ENCODE measurements at regions of chr19 and their contacts with region 1.

Region 1: GRCh38 chr19:16324384-16325160 is at the start of gene KLF2:
- DNase-seq: peak; percentile 92
- ATAC-seq: peak; percentile 63
- H3K4me3 Mint-ChIP-seq: peak within 1 kb of the TSS; percentile 77
- H3K27ac Mint-ChIP-seq: peak within 1 kb of the TSS; percentile 81
- H3K4me1 Mint-ChIP-seq: peaks cover 77% of the 10 kb centered on the region
- H3K27me3 Mint-ChIP-seq: no peaks in the 10 kb centered on the region
- CTCF ChIP-seq: no peak
- total RNA-seq, gene KLF2: 76.8 and 87.6 TPM in 2 replicates

Region 2: GRCh38 chr19:15828429-15829305 is 495.9 kb before region 1 on chr19:
- CTCF ChIA-PET with region 1: no interaction called
- POLR2A ChIA-PET with region 1: no interaction called
- intact Hi-C with region 1: no loop called
- DNase-seq: no peak
- ATAC-seq: no peak
- H3K4me3 Mint-ChIP-seq: no peak overlapping the region
- H3K27ac Mint-ChIP-seq: no peak overlapping the region
- H3K4me1 Mint-ChIP-seq: no peaks in the 10 kb centered on the region
- H3K27me3 Mint-ChIP-seq: peaks cover 21% of the 10 kb centered on the region
- CTCF ChIP-seq: no peak

Region 3: DNA sequence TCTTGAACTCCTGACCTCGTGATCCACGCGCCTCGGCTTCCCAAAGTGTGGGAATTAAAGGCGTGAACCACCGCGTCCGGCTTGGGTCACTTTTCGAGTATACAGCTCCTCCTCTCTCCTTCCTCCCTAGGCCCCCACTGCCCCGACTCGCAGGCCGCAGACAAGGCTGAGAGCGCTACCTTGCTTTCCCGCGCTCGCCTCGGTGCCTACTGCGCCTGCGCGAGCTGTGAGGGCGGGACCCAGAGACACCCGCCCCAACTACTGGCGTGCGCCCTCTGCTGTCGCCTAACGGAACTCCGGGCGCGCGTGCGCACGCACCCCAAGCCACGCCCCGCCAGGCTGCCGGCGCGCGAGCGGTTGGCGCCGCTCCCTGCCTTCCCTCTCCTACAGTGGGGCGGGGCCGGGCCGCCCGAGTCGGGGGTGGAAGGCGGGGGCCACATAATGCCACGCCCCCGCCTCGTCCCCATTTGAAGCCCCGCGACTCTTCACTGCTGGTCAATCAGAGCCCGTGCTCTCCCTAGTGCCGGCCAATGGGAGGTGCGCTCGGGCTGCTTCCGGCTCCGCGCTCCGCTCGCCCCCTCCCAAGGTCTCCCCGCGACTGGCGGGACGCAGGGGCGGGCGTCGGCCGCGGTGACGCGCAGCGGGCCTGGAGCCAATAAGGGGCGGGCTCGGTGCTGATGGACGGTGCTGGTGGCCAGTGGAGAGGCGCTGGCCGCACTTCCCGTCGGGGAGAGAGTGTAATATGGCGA is 213.2 kb before region 1 on chr19 and contains the start of gene RAB8A:
- CTCF ChIA-PET with region 1: no interaction called
- POLR2A ChIA-PET with region 1: interaction called, 4 read pairs
- intact Hi-C with region 1: loop called (anchors 10 kb)
- DNase-seq: peak; percentile 100
- ATAC-seq: peak; percentile 90
- H3K4me3 Mint-ChIP-seq: peak within 1 kb of the TSS; percentile 99
- H3K27ac Mint-ChIP-seq: peak within 1 kb of the TSS; percentile 97
- H3K4me1 Mint-ChIP-seq: peaks cover 46% of the 10 kb centered on the region
- H3K27me3 Mint-ChIP-seq: no peaks in the 10 kb centered on the region
- CTCF ChIP-seq: peak; percentile 73
- total RNA-seq, gene RAB8A: 157 and 171 TPM in 2 replicates

Region 4: DNA sequence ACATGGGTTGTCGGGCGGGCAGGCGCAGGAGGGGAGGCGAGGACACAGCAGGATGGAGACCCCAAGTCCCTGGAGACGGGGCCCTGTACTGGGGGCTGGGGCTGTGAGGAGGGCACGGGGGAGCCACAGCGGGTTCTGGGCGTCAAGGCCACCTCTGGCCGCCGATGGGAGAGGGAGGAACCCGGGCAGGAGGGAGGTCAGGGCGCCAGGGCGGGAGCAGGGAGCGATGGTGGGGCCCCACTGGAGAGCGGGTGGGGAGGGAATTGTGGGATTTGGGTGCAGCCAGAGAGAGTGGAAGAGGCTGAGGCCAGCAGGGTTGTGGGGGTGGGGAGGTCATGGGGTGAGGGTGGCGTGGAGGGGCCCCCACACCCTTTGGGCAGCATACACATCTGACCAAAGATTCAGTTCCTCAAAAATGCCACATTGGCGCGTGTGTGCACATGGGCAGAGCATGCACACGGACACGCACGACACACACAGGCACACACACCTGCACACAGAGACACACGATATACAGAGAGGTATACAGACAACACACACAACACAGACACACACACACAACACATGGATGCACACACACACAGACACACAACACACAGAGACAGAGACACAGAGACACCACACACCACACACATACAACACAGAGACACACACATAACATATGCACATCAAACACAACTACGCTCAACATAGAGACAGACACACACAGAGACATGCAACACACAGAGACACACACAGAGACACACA is 71.9 kb before region 1 on chr19:
- CTCF ChIA-PET with region 1: interaction called, 41 read pairs
- POLR2A ChIA-PET with region 1: interaction called, 445 read pairs
- intact Hi-C with region 1: loop called (anchors 1 kb)
- DNase-seq: no peak
- ATAC-seq: peak; percentile 65
- H3K4me3 Mint-ChIP-seq: peak overlapping the region; percentile 17
- H3K27ac Mint-ChIP-seq: no peak overlapping the region
- H3K4me1 Mint-ChIP-seq: peaks cover 55% of the 10 kb centered on the region
- H3K27me3 Mint-ChIP-seq: no peaks in the 10 kb centered on the region
- CTCF ChIP-seq: no peak

Region 5: DNA sequence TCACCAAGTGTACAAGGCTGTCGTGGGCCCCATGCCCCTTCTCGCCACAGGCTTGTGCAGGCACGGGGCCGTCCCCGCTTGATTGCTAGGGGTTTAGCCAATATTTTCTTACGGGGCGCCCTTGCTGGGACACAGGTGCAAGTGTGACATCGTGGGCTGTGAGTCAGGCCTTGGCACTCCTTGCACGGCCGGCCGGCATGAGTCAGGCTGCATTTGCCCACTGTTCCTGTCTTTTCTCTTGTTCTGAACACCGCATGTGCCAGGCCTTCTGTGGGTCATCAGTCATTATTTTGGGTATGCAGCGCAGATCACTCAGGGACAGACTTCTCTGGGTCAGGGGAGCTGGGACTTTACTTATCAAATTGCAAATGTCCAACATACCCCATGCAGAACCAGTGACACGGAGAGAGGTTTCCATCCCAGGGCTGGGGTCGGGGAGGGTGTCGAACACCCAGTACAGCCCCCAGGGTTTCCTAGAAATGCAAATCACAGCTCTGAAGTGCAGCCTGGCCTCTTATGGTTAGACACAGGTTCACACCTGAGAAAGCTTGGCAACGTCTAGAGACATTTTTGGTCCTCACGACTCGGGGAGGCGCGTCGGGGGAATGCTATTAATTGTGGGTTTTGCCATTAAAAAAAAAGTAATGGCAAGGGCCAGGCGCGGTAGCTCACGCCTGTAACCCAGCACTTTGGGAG is 22.4 kb before region 1 on chr19:
- CTCF ChIA-PET with region 1: interaction called, 4 read pairs
- POLR2A ChIA-PET with region 1: interaction called, 16 read pairs
- intact Hi-C with region 1: loop called (anchors 1 kb)
- DNase-seq: peak; percentile 43
- ATAC-seq: peak; percentile 81
- H3K4me3 Mint-ChIP-seq: peak overlapping the region; percentile 50
- H3K27ac Mint-ChIP-seq: peak overlapping the region; percentile 88
- H3K4me1 Mint-ChIP-seq: peaks cover 22% of the 10 kb centered on the region
- H3K27me3 Mint-ChIP-seq: no peaks in the 10 kb centered on the region
- CTCF ChIP-seq: no peak

Region 6: GRCh38 chr19:16382775-16383543 is 58.4 kb after region 1 on chr19:
- CTCF ChIA-PET with region 1: interaction called, 32 read pairs
- POLR2A ChIA-PET with region 1: interaction called, 223 read pairs
- intact Hi-C with region 1: loop called (anchors 1 kb)
- DNase-seq: peak; percentile 63
- ATAC-seq: peak; percentile 59
- H3K4me3 Mint-ChIP-seq: peak overlapping the region; percentile 57
- H3K27ac Mint-ChIP-seq: peak overlapping the region; percentile 94
- H3K4me1 Mint-ChIP-seq: peaks cover 82% of the 10 kb centered on the region
- H3K27me3 Mint-ChIP-seq: no peaks in the 10 kb centered on the region
- CTCF ChIP-seq: no peak

Region 7: GRCh38 chr19:16518483-16519229 is 194.1 kb after region 1 on chr19:
- CTCF ChIA-PET with region 1: no interaction called
- POLR2A ChIA-PET with region 1: no interaction called
- intact Hi-C with region 1: no loop called
- DNase-seq: no peak
- ATAC-seq: no peak
- H3K4me3 Mint-ChIP-seq: no peak overlapping the region
- H3K27ac Mint-ChIP-seq: no peak overlapping the region
- H3K4me1 Mint-ChIP-seq: no peaks in the 10 kb centered on the region
- H3K27me3 Mint-ChIP-seq: no peaks in the 10 kb centered on the region
- CTCF ChIP-seq: no peak

Region 8: GRCh38 chr19:17847538-17848366 is 1523.2 kb after region 1 on chr19 and contains the start of gene JAK3:
- CTCF ChIA-PET with region 1: no interaction called
- POLR2A ChIA-PET with region 1: interaction called, 10 read pairs
- intact Hi-C with region 1: no loop called
- DNase-seq: peak; percentile 79
- ATAC-seq: peak; percentile 86
- H3K4me3 Mint-ChIP-seq: peak within 1 kb of the TSS; percentile 94
- H3K27ac Mint-ChIP-seq: peak within 1 kb of the TSS; percentile 96
- H3K4me1 Mint-ChIP-seq: peaks cover 73% of the 10 kb centered on the region
- H3K27me3 Mint-ChIP-seq: no peaks in the 10 kb centered on the region
- CTCF ChIP-seq: no peak
- total RNA-seq, gene JAK3: 213 and 256 TPM in 2 replicates